GM12878 (cell line): ENCODE measurements at regions of chrX and their contacts with region 1.

Region 1: DNA sequence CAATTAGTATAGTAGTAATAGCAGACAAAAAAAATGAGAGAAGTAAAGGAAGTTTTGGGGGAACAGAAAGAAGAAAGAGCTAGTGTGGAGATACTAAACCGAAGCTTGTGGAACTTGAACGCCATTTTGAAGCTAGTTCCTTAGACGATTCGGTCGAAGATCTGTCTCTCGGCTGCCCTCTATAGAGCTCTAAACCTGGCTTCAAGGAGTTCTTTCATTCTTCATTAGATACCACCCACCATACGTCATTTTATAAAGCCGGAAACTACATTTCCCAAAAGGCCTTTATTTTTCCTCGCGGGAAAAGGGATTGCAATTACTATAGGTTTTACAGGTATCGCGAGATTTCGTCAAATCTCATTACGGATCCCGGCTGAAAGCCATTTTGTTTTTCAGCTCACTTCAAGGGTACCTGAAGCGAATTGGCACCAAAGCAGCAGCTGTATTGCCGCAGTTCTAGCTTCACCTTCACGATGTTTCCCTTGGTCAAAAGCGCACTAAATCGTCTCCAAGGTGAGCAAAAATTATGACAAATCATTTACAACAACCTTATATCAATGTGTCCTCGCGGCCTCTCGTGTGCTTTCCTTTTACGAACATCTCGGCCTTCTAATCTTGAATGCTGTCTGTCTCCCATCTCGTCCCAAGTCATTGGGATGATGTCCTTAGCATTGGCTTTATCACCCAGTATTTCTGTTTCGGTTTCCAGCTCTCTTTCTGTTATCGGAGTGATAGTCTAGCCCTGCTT is at the start of gene COX7B:
- DNase-seq: peak; percentile 92
- ATAC-seq: peak; percentile 70
- H3K4me3 ChIP-seq: peak within 1 kb of the TSS; percentile 80
- H3K27ac ChIP-seq: peak within 1 kb of the TSS; percentile 75
- H3K4me1 ChIP-seq: no peaks in the 10 kb centered on the region
- H3K27me3 ChIP-seq: no peaks in the 10 kb centered on the region
- CTCF ChIP-seq: peak; percentile 35 to 54 (median 41); a peak in 4 of 6 replicates
- EP300 ChIP-seq: no peak
- POLR2A ChIP-seq: peak; percentile 78
- RAD21 ChIP-seq: peak; percentile 54
- polyA plus RNA-seq, gene COX7B: 2,041 to 2,070 TPM

Region 2: GRCh38 chrX:76148753-76149152 is 1750.5 kb before region 1 on chrX:
- CTCF ChIA-PET with region 1: no interaction called
- POLR2A ChIA-PET with region 1: no interaction called
- RAD21 ChIA-PET with region 1: no interaction called
- SMC1A ChIA-PET with region 1: no interaction called
- in situ Hi-C with region 1: no loop called
- intact Hi-C with region 1: loop called (anchors 5 kb)
- DNase-seq: peak; percentile 45
- ATAC-seq: peak; percentile 30
- H3K4me3 ChIP-seq: peak overlapping the region; percentile 31
- H3K27ac ChIP-seq: peak overlapping the region; percentile 84
- H3K4me1 ChIP-seq: peaks cover 6% of the 10 kb centered on the region
- H3K27me3 ChIP-seq: no peaks in the 10 kb centered on the region
- CTCF ChIP-seq: no peak
- EP300 ChIP-seq: no peak
- POLR2A ChIP-seq: no peak
- RAD21 ChIP-seq: no peak

Region 3: GRCh38 chrX:77910108-77910840 is 11.0 kb after region 1 on chrX and contains the start of gene ATP7A:
- CTCF ChIA-PET with region 1: interaction called, 24 read pairs
- POLR2A ChIA-PET with region 1: interaction called, 11 read pairs
- RAD21 ChIA-PET with region 1: interaction called, 31 read pairs
- SMC1A ChIA-PET with region 1: interaction called, 9 read pairs
- in situ Hi-C with region 1: no loop called
- intact Hi-C with region 1: no loop called
- DNase-seq: peak; percentile 69
- ATAC-seq: peak; percentile 93
- H3K4me3 ChIP-seq: peak within 1 kb of the TSS; percentile 71
- H3K27ac ChIP-seq: peak within 1 kb of the TSS; percentile 62
- H3K4me1 ChIP-seq: no peaks in the 10 kb centered on the region
- H3K27me3 ChIP-seq: no peaks in the 10 kb centered on the region
- CTCF ChIP-seq: peak; percentile 53 to 68 (median 65)
- EP300 ChIP-seq: no peak
- POLR2A ChIP-seq: peak; percentile 74
- RAD21 ChIP-seq: peak; percentile 68
- polyA plus RNA-seq, gene ATP7A: 2.5 to 3.7 TPM

Region 4: DNA sequence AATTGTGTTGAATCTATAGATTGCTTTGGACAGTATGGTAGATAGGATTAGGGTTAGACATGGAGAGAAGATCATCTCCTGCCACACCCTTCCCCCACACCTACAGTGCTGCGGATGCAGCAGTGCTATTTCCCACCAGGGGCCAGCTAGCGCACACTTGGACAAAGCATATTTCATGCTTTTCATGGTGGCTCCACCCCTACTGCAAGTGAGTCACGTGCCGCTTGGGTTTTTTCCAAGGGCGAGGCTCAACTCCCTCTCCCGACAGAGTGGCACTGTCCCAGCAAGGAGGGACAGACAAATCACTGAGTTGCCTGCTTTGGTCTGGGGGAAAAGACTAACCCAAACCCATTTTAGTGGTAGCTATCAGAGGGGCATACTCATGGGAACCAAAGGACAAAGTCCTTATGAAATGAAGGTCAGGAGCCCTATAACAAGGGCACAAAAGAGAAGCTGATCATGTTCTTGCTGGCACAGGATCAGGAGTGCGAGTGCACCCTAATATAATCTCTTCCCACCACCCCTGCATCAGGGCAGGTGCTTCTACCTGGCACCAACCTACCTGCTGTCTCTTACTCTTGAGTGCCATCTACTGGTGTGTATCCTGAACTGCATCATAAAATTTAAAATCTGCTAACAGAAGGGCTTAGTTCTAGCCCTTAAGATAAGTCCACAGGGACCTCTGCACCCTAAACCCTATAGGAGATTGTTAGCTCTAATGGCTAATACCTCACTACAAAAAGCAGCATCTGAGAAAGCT is 125.3 kb after region 1 on chrX:
- CTCF ChIA-PET with region 1: interaction called, 30 read pairs
- POLR2A ChIA-PET with region 1: interaction called, 3 read pairs
- RAD21 ChIA-PET with region 1: interaction called, 20 read pairs
- SMC1A ChIA-PET with region 1: interaction called, 17 read pairs
- in situ Hi-C with region 1: loop called (anchors 10 kb)
- intact Hi-C with region 1: no loop called
- DNase-seq: no peak
- ATAC-seq: peak; percentile 82
- H3K4me3 ChIP-seq: no peak overlapping the region
- H3K27ac ChIP-seq: no peak overlapping the region
- H3K4me1 ChIP-seq: no peaks in the 10 kb centered on the region
- H3K27me3 ChIP-seq: no peaks in the 10 kb centered on the region
- CTCF ChIP-seq: peak; percentile 64 to 76 (median 68)
- EP300 ChIP-seq: no peak
- POLR2A ChIP-seq: no peak
- RAD21 ChIP-seq: peak; percentile 82

Region 5: DNA sequence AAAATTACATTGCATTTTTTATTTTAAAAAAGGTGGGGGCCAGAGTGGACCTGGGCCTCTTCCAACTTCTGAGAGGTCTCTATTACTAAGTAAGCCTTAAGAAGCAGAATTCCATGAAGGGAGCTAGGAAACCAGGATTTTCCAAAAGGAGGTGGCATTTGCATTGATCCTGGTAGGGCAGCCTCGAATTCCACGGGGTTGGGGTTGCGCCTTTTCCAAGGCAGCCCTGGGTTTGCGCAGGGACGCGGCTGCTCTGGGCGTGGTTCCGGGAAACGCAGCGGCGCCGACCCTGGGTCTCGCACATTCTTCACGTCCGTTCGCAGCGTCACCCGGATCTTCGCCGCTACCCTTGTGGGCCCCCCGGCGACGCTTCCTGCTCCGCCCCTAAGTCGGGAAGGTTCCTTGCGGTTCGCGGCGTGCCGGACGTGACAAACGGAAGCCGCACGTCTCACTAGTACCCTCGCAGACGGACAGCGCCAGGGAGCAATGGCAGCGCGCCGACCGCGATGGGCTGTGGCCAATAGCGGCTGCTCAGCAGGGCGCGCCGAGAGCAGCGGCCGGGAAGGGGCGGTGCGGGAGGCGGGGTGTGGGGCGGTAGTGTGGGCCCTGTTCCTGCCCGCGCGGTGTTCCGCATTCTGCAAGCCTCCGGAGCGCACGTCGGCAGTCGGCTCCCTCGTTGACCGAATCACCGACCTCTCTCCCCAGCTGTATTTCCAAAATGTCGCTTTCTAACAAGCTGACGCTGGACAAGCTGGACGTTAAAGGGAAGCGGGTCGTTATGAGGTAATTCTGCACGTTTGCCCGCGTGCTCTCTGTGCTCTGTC is 204.6 kb after region 1 on chrX and contains the start of gene PGK1:
- CTCF ChIA-PET with region 1: interaction called, 5 read pairs
- POLR2A ChIA-PET with region 1: interaction called, 4 read pairs
- RAD21 ChIA-PET with region 1: interaction called, 3 read pairs
- SMC1A ChIA-PET with region 1: no interaction called
- in situ Hi-C with region 1: loop called (anchors 5 kb)
- intact Hi-C with region 1: loop called (anchors 5 kb)
- DNase-seq: peak; percentile 84
- ATAC-seq: peak; percentile 96
- H3K4me3 ChIP-seq: peak within 1 kb of the TSS; percentile 82
- H3K27ac ChIP-seq: peak within 1 kb of the TSS; percentile 86
- H3K4me1 ChIP-seq: peaks cover 3% of the 10 kb centered on the region; the same call in 1 of the 2 replicates
- H3K27me3 ChIP-seq: no peaks in the 10 kb centered on the region
- CTCF ChIP-seq: no peak
- EP300 ChIP-seq: 0 out of 4 replicates have a peak, but pooled peaks of 1 of the 2 experiments have one; percentile 19
- POLR2A ChIP-seq: peak; percentile 98
- RAD21 ChIP-seq: no peak
- polyA plus RNA-seq, gene PGK1: 633 to 835 TPM